ENCODE measurements at regions of chr3 and their contacts with region 1.

Region 1: DNA sequence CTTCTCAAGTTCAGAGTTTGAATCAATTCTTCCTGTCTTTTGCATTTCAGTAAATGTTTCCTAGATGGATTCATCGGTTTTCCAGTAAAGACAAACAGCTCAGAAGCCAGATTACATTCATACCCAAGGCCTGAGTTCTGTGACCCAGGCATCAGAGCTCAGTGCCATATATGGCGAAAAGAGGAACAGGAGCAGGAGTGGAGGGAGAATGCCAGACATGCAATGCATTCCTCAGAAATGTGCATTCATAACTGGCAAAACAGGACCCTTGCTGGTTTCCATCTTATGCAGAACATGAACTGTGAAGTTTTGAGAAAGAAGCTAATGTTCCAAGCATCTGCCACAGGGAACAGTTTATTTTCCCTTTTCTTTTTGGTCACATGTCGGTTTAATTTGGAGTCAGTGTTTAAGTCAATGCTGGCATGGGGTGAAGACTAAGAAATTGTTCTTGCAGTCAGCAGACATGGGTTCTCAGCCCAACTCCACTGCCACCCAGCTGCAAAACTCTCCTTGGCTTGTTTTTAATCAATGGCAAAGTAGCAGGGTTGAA is 116.5 kb downstream of the LPP start:
- DNase-seq: peak; percentile 77
- H3K4me3 ChIP-seq: no peak overlapping the region
- H3K27me3 ChIP-seq: no peaks in the 10 kb centered on the region
- CTCF ChIP-seq: no peak

Region 2: GRCh38 chr3:188209740-188210139 is 60.8 kb before region 1 on chr3:
- CTCF ChIA-PET with region 1: no interaction called
- POLR2A ChIA-PET with region 1: interaction called, 14 read pairs
- DNase-seq: no peak
- H3K4me3 ChIP-seq: no peak overlapping the region
- H3K27me3 ChIP-seq: no peaks in the 10 kb centered on the region
- CTCF ChIP-seq: no peak

Region 3: DNA sequence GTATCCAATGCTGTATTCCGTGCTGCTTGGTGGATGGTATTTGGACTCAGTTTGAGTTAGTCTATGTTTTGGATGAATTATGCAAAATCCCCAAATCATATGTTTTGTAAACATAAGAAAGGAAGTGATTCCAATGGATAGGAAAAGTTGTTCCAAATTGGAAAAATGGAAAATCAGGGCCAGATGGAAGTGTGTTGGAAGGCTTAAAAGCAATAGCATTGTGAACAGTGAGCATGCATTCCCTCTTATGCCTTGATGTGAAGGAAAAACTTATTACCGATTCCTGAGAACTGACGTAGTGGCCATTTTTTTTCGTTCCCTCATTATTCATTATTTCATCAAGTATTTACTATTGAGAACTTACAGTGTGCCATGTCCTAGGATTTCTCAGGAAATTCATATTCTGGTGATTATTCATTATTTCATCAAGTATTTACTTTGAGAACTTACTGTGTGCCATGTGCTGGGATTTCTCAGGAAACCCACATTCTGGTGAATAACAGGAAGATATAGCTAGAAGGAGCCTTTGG is 757.2 kb after region 1 on chr3:
- CTCF ChIA-PET with region 1: no interaction called
- POLR2A ChIA-PET with region 1: interaction called, 28 read pairs
- DNase-seq: no peak
- H3K4me3 ChIP-seq: no peak overlapping the region
- H3K27me3 ChIP-seq: no peaks in the 10 kb centered on the region
- CTCF ChIP-seq: no peak

Measured in BJ (cell line).